Lower leg skin (tissue), 4 donors: ENCODE measurements at regions of chr1 and their contacts with region 1.

Region 1: GRCh38 chr1:57007948-57008347 is 42.1 kb upstream of the C8B start:
- DNase-seq: no peak
- H3K4me3 ChIP-seq: no peak overlapping the region
- CTCF ChIP-seq: no peak
- POLR2A ChIP-seq: no peak

Region 2: GRCh38 chr1:56696663-56697062 is 311.3 kb before region 1 on chr1:
- intact Hi-C with region 1: no loop called
- DNase-seq: no peak
- H3K4me3 ChIP-seq: no peak overlapping the region
- CTCF ChIP-seq: no peak
- POLR2A ChIP-seq: no peak

Region 3: GRCh38 chr1:56967900-56968832 is 39.8 kb before region 1 on chr1:
- intact Hi-C with region 1: no loop called
- DNase-seq: no peak
- H3K4me3 ChIP-seq: no peak overlapping the region
- CTCF ChIP-seq: no peak
- POLR2A ChIP-seq: no peak

Region 4: GRCh38 chr1:57162607-57163261 is 154.8 kb after region 1 on chr1:
- intact Hi-C with region 1: no loop called
- DNase-seq: no peak
- H3K4me3 ChIP-seq: no peak overlapping the region
- CTCF ChIP-seq: no peak
- POLR2A ChIP-seq: no peak

Region 5: GRCh38 chr1:57934745-57935144 is 926.8 kb after region 1 on chr1:
- intact Hi-C with region 1: loop called (anchors 5 kb)
- DNase-seq: no peak
- H3K4me3 ChIP-seq: no peak overlapping the region
- CTCF ChIP-seq: no peak
- POLR2A ChIP-seq: no peak